CD8-positive, alpha-beta T cell (primary cell): ENCODE measurements at regions of chr2 and their contacts with region 1.

Region 1: DNA sequence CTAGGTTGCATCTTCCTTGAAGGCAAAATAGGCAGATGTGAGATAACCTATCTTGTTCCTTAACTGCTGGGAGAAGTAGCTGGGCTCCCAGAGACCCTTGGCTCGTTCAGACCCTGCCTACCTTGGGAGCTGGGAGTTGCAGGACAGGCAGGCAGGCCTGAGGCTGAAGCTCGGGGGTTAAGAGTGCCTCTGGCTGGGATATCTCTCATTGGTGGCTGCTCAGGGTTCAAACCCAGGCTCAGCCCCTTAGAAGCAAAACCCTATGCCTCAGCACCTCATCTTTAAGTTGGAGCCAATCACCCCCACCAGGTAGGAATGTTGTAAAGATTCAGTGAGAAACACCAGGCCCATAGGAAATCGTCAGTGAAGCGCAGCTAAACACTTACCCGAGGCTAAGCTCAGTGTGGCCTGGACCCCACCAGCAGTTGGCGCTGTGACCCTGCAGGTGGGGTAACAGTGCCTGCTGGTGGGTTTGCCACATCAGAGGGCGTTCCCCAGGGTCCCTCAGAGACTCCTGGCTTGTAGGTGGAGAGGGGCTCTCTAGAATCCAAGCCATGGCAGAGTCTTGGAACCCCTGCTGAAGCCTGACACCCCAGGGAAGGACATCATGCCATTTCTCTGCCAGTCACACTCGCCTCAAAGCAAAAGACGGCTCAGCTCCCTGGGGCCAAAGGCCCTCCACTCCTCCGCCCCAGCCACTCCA is 54.6 kb upstream of the GPR17 start:
- DNase-seq: peak; percentile 30 to 79 (median 66)
- ATAC-seq: peak; percentile 98
- H3K4me3 ChIP-seq: no peak overlapping the region
- H3K4me3 Mint-ChIP-seq: no peak overlapping the region
- H3K27ac ChIP-seq: no peak overlapping the region
- H3K27ac Mint-ChIP-seq: no peak overlapping the region
- H3K4me1 ChIP-seq: no peaks in the 10 kb centered on the region
- H3K4me1 Mint-ChIP-seq: peaks cover 4% of the 10 kb centered on the region
- H3K27me3 ChIP-seq: no peaks in the 10 kb centered on the region
- H3K27me3 Mint-ChIP-seq: no peaks in the 10 kb centered on the region
- CTCF ChIP-seq: peak; percentile 66

Region 2: GRCh38 chr2:127637725-127638252 is 46.4 kb after region 1 on chr2:
- CTCF ChIA-PET with region 1: interaction called, 15 read pairs
- POLR2A ChIA-PET with region 1: no interaction called
- intact Hi-C with region 1: no loop called
- DNase-seq: no peak
- ATAC-seq: no peak
- H3K4me3 ChIP-seq: peak overlapping the region in 1 of 2 experiments; percentile 15
- H3K4me3 Mint-ChIP-seq: peak overlapping the region; percentile 43
- H3K27ac ChIP-seq: no peak overlapping the region
- H3K27ac Mint-ChIP-seq: peak overlapping the region; percentile 89
- H3K4me1 ChIP-seq: peaks cover 94% of the 10 kb centered on the region
- H3K4me1 Mint-ChIP-seq: peaks cover 71% of the 10 kb centered on the region
- H3K27me3 ChIP-seq: no peaks in the 10 kb centered on the region
- H3K27me3 Mint-ChIP-seq: no peaks in the 10 kb centered on the region
- CTCF ChIP-seq: no peak

Region 3: GRCh38 chr2:127644066-127645025 is 53.0 kb after region 1 on chr2:
- CTCF ChIA-PET with region 1: interaction called, 203 read pairs
- POLR2A ChIA-PET with region 1: interaction called, 13 read pairs
- intact Hi-C with region 1: loop called in 1 of 2 experiments (anchors 1 kb)
- DNase-seq: no peak
- ATAC-seq: no peak
- H3K4me3 ChIP-seq: no peak overlapping the region
- H3K4me3 Mint-ChIP-seq: no peak overlapping the region
- H3K27ac ChIP-seq: no peak overlapping the region
- H3K27ac Mint-ChIP-seq: peak overlapping the region; percentile 84
- H3K4me1 ChIP-seq: peaks cover 42% of the 10 kb centered on the region
- H3K4me1 Mint-ChIP-seq: peaks cover 44% of the 10 kb centered on the region
- H3K27me3 ChIP-seq: no peaks in the 10 kb centered on the region
- H3K27me3 Mint-ChIP-seq: no peaks in the 10 kb centered on the region
- CTCF ChIP-seq: no peak

Region 4: DNA sequence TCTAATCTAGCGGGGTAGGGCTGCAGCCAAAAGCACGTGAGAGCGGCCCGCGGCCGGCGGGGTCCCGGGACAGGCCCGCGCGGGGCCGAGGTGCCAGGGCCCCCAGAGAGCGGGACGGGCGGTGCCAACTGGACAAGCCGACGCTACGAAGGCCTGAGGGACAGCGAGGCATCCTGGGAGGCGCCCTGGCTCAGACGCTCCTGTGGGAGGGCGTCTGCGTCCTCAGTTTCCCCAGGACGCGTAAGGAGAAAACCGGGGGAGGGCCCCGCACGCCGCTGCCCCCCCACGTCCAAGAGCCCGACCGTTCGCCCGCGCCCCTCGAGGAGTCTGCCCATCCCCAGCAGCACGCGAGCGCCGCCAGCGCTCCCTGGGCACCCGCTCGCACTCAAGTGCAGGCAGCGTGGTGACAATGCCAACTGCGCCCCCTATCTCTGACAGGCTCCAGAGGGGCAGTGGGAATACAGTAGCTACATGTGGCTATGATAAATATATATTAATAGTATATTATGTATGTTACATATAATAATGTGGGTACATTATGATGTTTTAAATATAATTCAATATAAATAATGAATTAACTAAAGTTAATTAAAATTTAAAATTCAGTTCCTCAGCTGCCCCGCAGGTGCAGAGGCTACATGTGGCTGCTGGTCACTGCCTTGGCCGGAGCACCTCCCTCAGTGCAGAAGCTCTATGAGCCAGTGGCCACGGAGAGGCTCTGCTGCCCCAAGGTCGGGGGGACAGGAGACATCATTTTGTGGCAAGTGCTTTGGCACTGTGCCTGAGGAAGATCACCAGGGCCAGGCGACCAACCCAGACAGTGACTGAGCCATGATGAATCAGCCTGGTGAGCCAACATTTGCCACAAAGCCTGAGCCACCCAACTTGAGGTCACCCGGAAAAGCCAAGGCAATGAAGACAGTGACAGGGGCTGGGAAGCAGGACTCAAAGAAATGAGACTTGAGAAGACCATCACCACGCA is 104.4 kb after region 1 on chr2:
- CTCF ChIA-PET with region 1: interaction called, 5 read pairs
- POLR2A ChIA-PET with region 1: no interaction called
- intact Hi-C with region 1: loop called (anchors 1 to 2 kb)
- DNase-seq: peak in 6 of 9 experiments; percentile 36 to 75 (median 60)
- ATAC-seq: peak; percentile 96
- H3K4me3 ChIP-seq: no peak overlapping the region
- H3K4me3 Mint-ChIP-seq: peak overlapping the region; percentile 50
- H3K27ac ChIP-seq: no peak overlapping the region
- H3K27ac Mint-ChIP-seq: no peak overlapping the region
- H3K4me1 ChIP-seq: peaks cover 6% of the 10 kb centered on the region
- H3K4me1 Mint-ChIP-seq: peaks cover 7% of the 10 kb centered on the region
- H3K27me3 ChIP-seq: no peaks in the 10 kb centered on the region
- H3K27me3 Mint-ChIP-seq: no peaks in the 10 kb centered on the region
- CTCF ChIP-seq: peak; percentile 68

Region 5: GRCh38 chr2:127857265-127857808 is 266.0 kb after region 1 on chr2:
- CTCF ChIA-PET with region 1: no interaction called
- POLR2A ChIA-PET with region 1: no interaction called
- intact Hi-C with region 1: no loop called
- DNase-seq: peak in 3 of 9 experiments; percentile 11 to 44 (median 22)
- ATAC-seq: no peak
- H3K4me3 ChIP-seq: peak overlapping the region; percentile 83 to 94
- H3K4me3 Mint-ChIP-seq: peak overlapping the region; percentile 90
- H3K27ac ChIP-seq: peak overlapping the region; percentile 76 to 82
- H3K27ac Mint-ChIP-seq: peak overlapping the region; percentile 85
- H3K4me1 ChIP-seq: peaks cover 28% of the 10 kb centered on the region
- H3K4me1 Mint-ChIP-seq: peaks cover 51% of the 10 kb centered on the region
- H3K27me3 ChIP-seq: no peaks in the 10 kb centered on the region
- H3K27me3 Mint-ChIP-seq: no peaks in the 10 kb centered on the region
- CTCF ChIP-seq: no peak

Region 6: GRCh38 chr2:128305159-128306087 is 714.1 kb after region 1 on chr2:
- CTCF ChIA-PET with region 1: no interaction called
- POLR2A ChIA-PET with region 1: no interaction called
- intact Hi-C with region 1: no loop called
- DNase-seq: no peak
- ATAC-seq: no peak
- H3K4me3 ChIP-seq: no peak overlapping the region
- H3K4me3 Mint-ChIP-seq: no peak overlapping the region
- H3K27ac ChIP-seq: no peak overlapping the region
- H3K27ac Mint-ChIP-seq: no peak overlapping the region
- H3K4me1 ChIP-seq: no peaks in the 10 kb centered on the region
- H3K4me1 Mint-ChIP-seq: peaks cover 4% of the 10 kb centered on the region
- H3K27me3 ChIP-seq: no peaks in the 10 kb centered on the region
- H3K27me3 Mint-ChIP-seq: no peaks in the 10 kb centered on the region
- CTCF ChIP-seq: no peak